ENCODE measurements at regions of chr6 and their contacts with region 1.

Region 1: DNA sequence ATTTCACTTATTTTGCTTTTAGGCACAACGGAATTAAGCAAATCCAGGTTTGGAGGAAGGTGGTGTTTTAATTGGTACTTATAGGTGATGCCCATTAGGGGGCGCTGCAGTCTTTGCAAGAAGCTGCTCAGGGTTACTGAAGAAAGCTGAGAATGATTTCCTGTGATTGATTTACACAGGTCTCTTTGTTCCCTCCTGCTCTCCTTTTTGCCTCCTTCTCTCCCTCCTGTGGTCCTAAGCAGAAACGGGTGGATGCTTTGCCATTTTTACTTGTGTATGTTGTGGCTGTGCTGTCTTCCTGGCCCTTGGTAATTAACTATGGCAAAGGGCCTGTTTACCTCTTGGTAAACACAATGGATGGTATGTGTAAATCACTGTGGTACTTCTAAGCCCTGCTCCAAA is 97.8 kb downstream of the ANKS1A start:
- DNase-seq: peak; percentile 67
- ATAC-seq: peak; percentile 97
- H3K4me3 Mint-ChIP-seq: no peak overlapping the region
- H3K27ac Mint-ChIP-seq: peak overlapping the region; percentile 83
- H3K4me1 Mint-ChIP-seq: peaks cover 8% of the 10 kb centered on the region
- H3K27me3 Mint-ChIP-seq: no peaks in the 10 kb centered on the region
- CTCF ChIP-seq: peak; percentile 91

Region 2: DNA sequence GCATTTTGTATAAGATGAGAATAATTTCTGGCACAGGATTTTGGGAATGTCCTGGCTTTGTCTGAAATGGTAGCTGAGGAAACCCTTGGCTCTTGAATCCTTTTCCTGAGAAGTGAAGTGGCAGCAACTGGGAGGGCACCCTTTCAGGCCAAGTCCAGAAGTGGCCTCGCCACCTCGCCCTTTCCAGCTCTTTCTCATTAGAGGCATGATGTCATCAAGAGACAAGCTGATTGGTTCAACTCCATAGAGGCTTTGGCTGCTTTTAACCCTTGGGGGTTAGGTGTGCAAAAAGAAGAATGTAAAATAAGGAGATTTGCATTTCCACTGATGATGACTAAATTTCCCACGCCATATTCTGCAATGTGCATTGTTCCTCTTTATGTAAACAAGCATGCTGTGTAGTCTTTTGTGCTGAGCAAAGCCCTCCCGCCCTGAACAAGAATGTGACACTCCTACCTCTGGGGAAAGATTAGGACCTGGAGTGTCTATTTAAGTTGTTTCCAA is 37.8 kb after region 1 on chr6:
- CTCF ChIA-PET with region 1: interaction called, 12 read pairs
- POLR2A ChIA-PET with region 1: no interaction called
- DNase-seq: no peak
- ATAC-seq: peak; percentile 59
- H3K4me3 Mint-ChIP-seq: peak overlapping the region; percentile 35
- H3K27ac Mint-ChIP-seq: peak overlapping the region; percentile 29
- H3K4me1 Mint-ChIP-seq: peaks cover 78% of the 10 kb centered on the region
- H3K27me3 Mint-ChIP-seq: no peaks in the 10 kb centered on the region
- CTCF ChIP-seq: no peak

Region 3: GRCh38 chr6:35048631-35049083 is 61.8 kb after region 1 on chr6:
- CTCF ChIA-PET with region 1: interaction called, 30 read pairs
- POLR2A ChIA-PET with region 1: no interaction called
- DNase-seq: peak; percentile 42
- ATAC-seq: peak; percentile 43
- H3K4me3 Mint-ChIP-seq: no peak overlapping the region
- H3K27ac Mint-ChIP-seq: no peak overlapping the region
- H3K4me1 Mint-ChIP-seq: no peaks in the 10 kb centered on the region
- H3K27me3 Mint-ChIP-seq: no peaks in the 10 kb centered on the region
- CTCF ChIP-seq: no peak

Region 4: GRCh38 chr6:35073766-35074471 is 87.1 kb after region 1 on chr6:
- CTCF ChIA-PET with region 1: interaction called, 12 read pairs
- POLR2A ChIA-PET with region 1: no interaction called
- DNase-seq: no peak
- ATAC-seq: no peak
- H3K4me3 Mint-ChIP-seq: no peak overlapping the region
- H3K27ac Mint-ChIP-seq: peak overlapping the region; percentile 74
- H3K4me1 Mint-ChIP-seq: peaks cover 28% of the 10 kb centered on the region
- H3K27me3 Mint-ChIP-seq: no peaks in the 10 kb centered on the region
- CTCF ChIP-seq: no peak

Region 5: DNA sequence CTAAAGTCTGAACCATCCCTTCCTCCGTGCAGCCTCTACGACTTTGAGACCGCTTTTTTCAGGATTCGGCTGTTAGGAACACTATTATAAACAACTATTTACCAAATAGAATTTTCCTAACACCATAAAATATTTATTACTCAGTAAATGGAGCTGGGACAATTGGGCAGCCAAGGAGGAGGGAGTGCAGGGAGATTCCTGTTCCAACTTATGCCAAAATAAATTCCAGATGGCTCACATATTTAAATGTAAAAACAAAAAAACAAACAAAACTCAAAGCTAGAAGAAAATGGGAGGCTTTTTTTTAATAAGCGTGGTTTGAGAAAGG is 106.2 kb after region 1 on chr6:
- CTCF ChIA-PET with region 1: interaction called, 12 read pairs
- POLR2A ChIA-PET with region 1: interaction called, 4 read pairs
- DNase-seq: no peak
- ATAC-seq: no peak
- H3K4me3 Mint-ChIP-seq: no peak overlapping the region
- H3K27ac Mint-ChIP-seq: peak overlapping the region; percentile 36; the same call in 1 of the 2 replicates
- H3K4me1 Mint-ChIP-seq: peaks cover 40% of the 10 kb centered on the region
- H3K27me3 Mint-ChIP-seq: no peaks in the 10 kb centered on the region
- CTCF ChIP-seq: no peak

Region 6: GRCh38 chr6:35128496-35128895 is 141.7 kb after region 1 on chr6:
- CTCF ChIA-PET with region 1: interaction called, 10 read pairs
- POLR2A ChIA-PET with region 1: no interaction called
- DNase-seq: no peak
- ATAC-seq: no peak
- H3K4me3 Mint-ChIP-seq: no peak overlapping the region
- H3K27ac Mint-ChIP-seq: no peak overlapping the region
- H3K4me1 Mint-ChIP-seq: no peaks in the 10 kb centered on the region
- H3K27me3 Mint-ChIP-seq: no peaks in the 10 kb centered on the region; the same call in 1 of the 2 replicates
- CTCF ChIP-seq: no peak

Region 7: GRCh38 chr6:35202066-35202546 is 215.3 kb after region 1 on chr6:
- CTCF ChIA-PET with region 1: interaction called, 14 read pairs
- POLR2A ChIA-PET with region 1: no interaction called
- DNase-seq: no peak
- ATAC-seq: peak; percentile 65
- H3K4me3 Mint-ChIP-seq: no peak overlapping the region
- H3K27ac Mint-ChIP-seq: no peak overlapping the region
- H3K4me1 Mint-ChIP-seq: peaks cover 4% of the 10 kb centered on the region
- H3K27me3 Mint-ChIP-seq: peaks cover 39% of the 10 kb centered on the region
- CTCF ChIP-seq: no peak